Activated CD4-positive, alpha-beta T cell treated with anti-CD3 and anti-CD28 coated beads, Interleukin-2, amount 10 ng/mL, durations not matched to agents 24 days and 14 days (primary cell): ENCODE measurements at regions of chr9 and their contacts with region 1.

Region 1: GRCh38 chr9:4297151-4297785 is 2.6 kb downstream of the GLIS3 start:
- DNase-seq: peak; percentile 78
- H3K4me3 Mint-ChIP-seq: peak overlapping the region; percentile 99
- H3K27ac Mint-ChIP-seq: peak overlapping the region; percentile 91
- H3K4me1 Mint-ChIP-seq: peaks cover 29% of the 10 kb centered on the region
- H3K27me3 Mint-ChIP-seq: peaks cover 69% of the 10 kb centered on the region

Region 2: GRCh38 chr9:2849941-2850340 is 1447.3 kb before region 1 on chr9:
- intact Hi-C with region 1: loop called (anchors 10 kb)
- DNase-seq: no peak
- H3K4me3 Mint-ChIP-seq: no peak overlapping the region
- H3K27ac Mint-ChIP-seq: peak overlapping the region; percentile 12
- H3K4me1 Mint-ChIP-seq: peaks cover 7% of the 10 kb centered on the region
- H3K27me3 Mint-ChIP-seq: peaks cover 6% of the 10 kb centered on the region

Region 3: GRCh38 chr9:4228606-4229005 is 68.7 kb before region 1 on chr9:
- intact Hi-C with region 1: loop called (anchors 5 kb)
- DNase-seq: no peak
- H3K4me3 Mint-ChIP-seq: no peak overlapping the region
- H3K27ac Mint-ChIP-seq: no peak overlapping the region
- H3K4me1 Mint-ChIP-seq: peaks cover 3% of the 10 kb centered on the region
- H3K27me3 Mint-ChIP-seq: peaks cover 2% of the 10 kb centered on the region

Region 4: DNA sequence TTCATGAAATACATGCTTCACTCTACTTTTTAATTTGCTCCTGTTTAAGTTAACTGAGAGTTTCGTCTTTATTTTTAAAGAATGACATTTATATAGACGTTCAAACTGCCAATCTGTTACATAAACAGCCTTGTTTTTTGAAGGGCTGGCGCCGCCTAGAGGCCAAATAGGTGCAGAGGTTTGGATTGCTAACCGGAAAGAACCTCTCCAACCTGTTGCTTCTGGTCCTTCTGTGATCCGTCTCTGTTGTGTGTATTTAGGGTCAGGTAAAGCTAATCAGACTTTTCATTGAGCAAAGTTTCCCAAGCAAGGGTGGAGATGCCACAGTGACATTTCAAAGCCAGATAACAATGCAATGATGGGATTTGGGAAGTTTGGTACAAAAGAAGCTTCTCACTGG is 42.1 kb after region 1 on chr9:
- intact Hi-C with region 1: loop called (anchors 1 kb)
- DNase-seq: peak; percentile 93
- H3K4me3 Mint-ChIP-seq: peak overlapping the region; percentile 46
- H3K27ac Mint-ChIP-seq: peak overlapping the region; percentile 56
- H3K4me1 Mint-ChIP-seq: peaks cover 5% of the 10 kb centered on the region
- H3K27me3 Mint-ChIP-seq: no peaks in the 10 kb centered on the region

Region 5: GRCh38 chr9:4366591-4367330 is 69.5 kb after region 1 on chr9:
- intact Hi-C with region 1: loop called (anchors 5 kb)
- DNase-seq: peak; percentile 71
- H3K4me3 Mint-ChIP-seq: no peak overlapping the region
- H3K27ac Mint-ChIP-seq: no peak overlapping the region
- H3K4me1 Mint-ChIP-seq: peaks cover 3% of the 10 kb centered on the region
- H3K27me3 Mint-ChIP-seq: peaks cover 11% of the 10 kb centered on the region

Region 6: GRCh38 chr9:4662108-4662988 is 365.1 kb after region 1 on chr9 and contains the start of gene PLPP6:
- intact Hi-C with region 1: loop called (anchors 10 kb)
- DNase-seq: peak; percentile 94
- H3K4me3 Mint-ChIP-seq: peak within 1 kb of the TSS; percentile 87
- H3K27ac Mint-ChIP-seq: peak within 1 kb of the TSS; percentile 79
- H3K4me1 Mint-ChIP-seq: peaks cover 43% of the 10 kb centered on the region
- H3K27me3 Mint-ChIP-seq: peaks cover 10% of the 10 kb centered on the region
- total RNA-seq, gene PLPP6: 5.5 and 6.0 TPM in 2 replicates

Region 7: DNA sequence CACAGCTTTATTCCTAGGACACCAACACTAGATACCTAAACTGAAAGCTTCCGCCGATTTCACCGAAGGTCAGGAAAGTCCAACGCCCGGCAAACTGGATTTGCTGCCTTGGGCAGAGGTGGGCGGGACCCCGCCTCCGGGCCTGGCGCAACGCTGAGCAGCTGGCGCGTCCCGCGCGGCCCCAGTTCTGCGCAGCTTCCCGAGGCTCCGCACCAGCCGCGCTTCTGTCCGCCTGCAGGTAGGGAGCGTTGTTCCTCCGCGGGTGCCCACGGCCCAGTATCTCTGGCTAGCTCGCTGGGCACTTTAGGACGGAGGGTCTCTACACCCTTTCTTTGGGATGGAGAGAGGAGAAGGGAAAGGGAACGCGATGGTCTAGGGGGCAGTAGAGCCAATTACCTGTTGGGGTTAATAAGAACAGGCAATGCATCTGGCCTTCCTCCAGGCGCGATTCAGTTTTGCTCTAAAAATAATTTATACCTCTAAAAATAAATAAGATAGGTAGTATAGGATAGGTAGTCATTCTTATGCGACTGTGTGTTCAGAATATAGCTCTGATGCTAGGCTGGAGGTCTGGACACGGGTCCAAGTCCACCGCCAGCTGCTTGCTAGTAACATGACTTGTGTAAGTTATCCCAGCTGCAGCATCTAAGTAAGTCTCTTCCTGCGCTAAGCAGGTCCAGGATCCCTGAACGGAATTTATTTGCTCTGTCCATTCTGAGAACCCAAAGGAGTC is 1153.3 kb after region 1 on chr9 and contains the start of gene CD274:
- intact Hi-C with region 1: loop called (anchors 10 kb)
- DNase-seq: peak; percentile 95
- H3K4me3 Mint-ChIP-seq: peak within 1 kb of the TSS; percentile 90
- H3K27ac Mint-ChIP-seq: peak within 1 kb of the TSS; percentile 90
- H3K4me1 Mint-ChIP-seq: peaks cover 56% of the 10 kb centered on the region
- H3K27me3 Mint-ChIP-seq: no peaks in the 10 kb centered on the region
- total RNA-seq, gene CD274: 52.1 and 57.6 TPM in 2 replicates